PC-3 (cell line): ENCODE measurements at regions of chr19 and their contacts with region 1.

Region 1: GRCh38 chr19:23686621-23687423 is at the start of gene ZNF675:
- DNase-seq: peak; percentile 93
- ATAC-seq: peak; percentile 90
- H3K4me3 ChIP-seq: peak within 1 kb of the TSS; percentile 94
- H3K27ac ChIP-seq: peak within 1 kb of the TSS; percentile 81
- H3K4me1 ChIP-seq: 0 out of 2 replicates have a peak, but pooled peaks cover 8% of the 10 kb centered on the region
- H3K27me3 ChIP-seq: no peaks in the 10 kb centered on the region
- CTCF ChIP-seq: peak; percentile 33; the same call in 1 of the 2 replicates
- total RNA-seq, gene ZNF675: 17.2 and 19.4 TPM in 2 replicates

Region 2: DNA sequence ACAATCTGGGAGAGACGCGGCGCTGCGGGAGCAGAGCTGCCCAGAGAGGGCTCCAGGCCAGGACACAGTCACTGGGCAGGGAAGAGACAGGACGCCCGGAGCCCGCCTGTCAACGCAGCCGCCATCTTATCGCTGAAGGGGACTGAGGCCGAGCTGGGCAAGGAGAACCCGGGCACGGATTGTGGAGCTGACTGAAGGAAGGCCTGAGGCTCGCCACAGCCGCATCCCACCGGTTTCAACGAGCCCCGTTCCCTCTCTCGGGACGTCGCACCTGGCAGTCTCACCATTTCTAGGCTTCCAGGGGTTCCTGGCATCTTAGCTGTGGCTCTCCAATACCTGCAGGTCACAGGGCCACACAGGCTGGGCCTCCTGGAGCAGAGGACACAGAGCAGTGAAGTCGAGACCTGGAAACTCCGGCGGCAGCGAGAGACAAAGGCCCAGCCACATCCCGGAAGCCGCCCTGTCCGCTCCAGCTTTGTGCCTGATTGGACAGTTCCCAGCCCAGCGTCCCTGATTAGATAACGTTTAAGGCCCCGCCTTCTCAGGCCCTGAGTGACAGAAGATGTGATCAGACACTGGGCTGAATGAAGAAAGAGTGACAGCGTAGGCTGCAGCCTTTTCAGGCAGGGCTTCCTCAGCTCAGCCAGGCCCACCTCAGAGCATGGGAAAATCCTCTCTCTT is 291.6 kb before region 1 on chr19 and contains the start of gene ZNF91:
- CTCF ChIA-PET with region 1: no interaction called
- POLR2A ChIA-PET with region 1: no interaction called
- intact Hi-C with region 1: loop called (anchors 10 kb)
- DNase-seq: peak; percentile 97
- ATAC-seq: peak; percentile 89
- H3K4me3 ChIP-seq: peak within 1 kb of the TSS; percentile 92
- H3K27ac ChIP-seq: peak within 1 kb of the TSS; percentile 95
- H3K4me1 ChIP-seq: peaks cover 33% of the 10 kb centered on the region
- H3K27me3 ChIP-seq: no peaks in the 10 kb centered on the region
- CTCF ChIP-seq: no peak
- total RNA-seq, gene ZNF91: 18.7 and 22.2 TPM in 2 replicates

Region 3: GRCh38 chr19:23762884-23763711 is 76.3 kb after region 1 on chr19:
- CTCF ChIA-PET with region 1: no interaction called
- POLR2A ChIA-PET with region 1: no interaction called
- intact Hi-C with region 1: loop called (anchors 5 kb)
- DNase-seq: peak; percentile 86
- ATAC-seq: peak; percentile 70
- H3K4me3 ChIP-seq: peak overlapping the region; percentile 89
- H3K27ac ChIP-seq: peak overlapping the region; percentile 86
- H3K4me1 ChIP-seq: no peaks in the 10 kb centered on the region
- H3K27me3 ChIP-seq: no peaks in the 10 kb centered on the region
- CTCF ChIP-seq: no peak

Region 4: GRCh38 chr19:23914402-23915301 is 227.8 kb after region 1 on chr19 and contains the start of gene ZNF726:
- CTCF ChIA-PET with region 1: no interaction called
- POLR2A ChIA-PET with region 1: interaction called, 8 read pairs
- intact Hi-C with region 1: loop called (anchors 10 kb)
- DNase-seq: peak; percentile 96
- ATAC-seq: peak; percentile 98
- H3K4me3 ChIP-seq: peak within 1 kb of the TSS; percentile 86
- H3K27ac ChIP-seq: peak within 1 kb of the TSS; percentile 44
- H3K4me1 ChIP-seq: no peaks in the 10 kb centered on the region
- H3K27me3 ChIP-seq: no peaks in the 10 kb centered on the region
- CTCF ChIP-seq: no peak
- total RNA-seq, gene ZNF726: 12.7 and 12.8 TPM in 2 replicates

Region 5: GRCh38 chr19:24033301-24033962 is 346.6 kb after region 1 on chr19:
- CTCF ChIA-PET with region 1: no interaction called
- POLR2A ChIA-PET with region 1: no interaction called
- intact Hi-C with region 1: loop called (anchors 5 kb)
- DNase-seq: peak; percentile 91
- ATAC-seq: peak; percentile 96
- H3K4me3 ChIP-seq: peak overlapping the region; percentile 88
- H3K27ac ChIP-seq: peak overlapping the region; percentile 90
- H3K4me1 ChIP-seq: no peaks in the 10 kb centered on the region; the same call in 1 of the 2 replicates
- H3K27me3 ChIP-seq: no peaks in the 10 kb centered on the region
- CTCF ChIP-seq: 0 out of 2 replicates have a peak, but pooled peaks have one; percentile 17